Mucosa of descending colon (tissue), 3 donors: ENCODE measurements at regions of chr16 and their contacts with region 1.

Region 1: GRCh38 chr16:82639666-82640336 is 13.0 kb downstream of the CDH13 start:
- DNase-seq: peak; percentile 62 to 82 (median 80)
- ATAC-seq: peak; percentile 67
- H3K4me3 ChIP-seq: no peak overlapping the region
- H3K4me1 ChIP-seq: peaks cover 17% of the 10 kb centered on the region
- CTCF ChIP-seq: peak; percentile 67

Region 2: DNA sequence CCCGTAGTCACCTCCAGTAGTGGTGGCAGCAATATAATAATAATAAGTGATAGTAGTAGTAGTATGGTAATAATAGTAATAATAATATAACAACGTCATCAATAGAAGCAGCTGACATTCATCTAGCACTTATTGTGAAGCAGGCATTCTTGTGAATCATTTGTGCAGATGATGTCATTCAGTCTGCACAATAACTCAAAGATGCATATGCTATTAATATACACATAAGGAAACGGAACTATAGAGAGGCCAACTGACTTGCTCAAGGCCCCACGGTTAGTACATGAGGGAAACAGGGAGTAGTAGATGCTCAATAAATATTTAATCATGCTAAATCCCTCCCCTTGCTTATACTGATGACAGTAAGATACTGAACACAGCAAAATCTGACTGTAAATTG is 1360.4 kb before region 1 on chr16:
- intact Hi-C with region 1: no loop called
- DNase-seq: no peak
- ATAC-seq: no peak
- H3K4me3 ChIP-seq: no peak overlapping the region
- H3K4me1 ChIP-seq: peaks cover 36% of the 10 kb centered on the region
- CTCF ChIP-seq: no peak

Region 3: GRCh38 chr16:83215406-83216001 is 575.7 kb after region 1 on chr16:
- intact Hi-C with region 1: loop called in 1 of 2 experiments (anchors 10 kb)
- DNase-seq: peak in 2 of 3 donors; percentile 63 to 64
- ATAC-seq: peak; percentile 67
- H3K4me3 ChIP-seq: no peak overlapping the region
- H3K4me1 ChIP-seq: no peaks in the 10 kb centered on the region
- CTCF ChIP-seq: peak; percentile 75